ENCODE measurements at regions of chr14 and their contacts with region 1.

Region 1: DNA sequence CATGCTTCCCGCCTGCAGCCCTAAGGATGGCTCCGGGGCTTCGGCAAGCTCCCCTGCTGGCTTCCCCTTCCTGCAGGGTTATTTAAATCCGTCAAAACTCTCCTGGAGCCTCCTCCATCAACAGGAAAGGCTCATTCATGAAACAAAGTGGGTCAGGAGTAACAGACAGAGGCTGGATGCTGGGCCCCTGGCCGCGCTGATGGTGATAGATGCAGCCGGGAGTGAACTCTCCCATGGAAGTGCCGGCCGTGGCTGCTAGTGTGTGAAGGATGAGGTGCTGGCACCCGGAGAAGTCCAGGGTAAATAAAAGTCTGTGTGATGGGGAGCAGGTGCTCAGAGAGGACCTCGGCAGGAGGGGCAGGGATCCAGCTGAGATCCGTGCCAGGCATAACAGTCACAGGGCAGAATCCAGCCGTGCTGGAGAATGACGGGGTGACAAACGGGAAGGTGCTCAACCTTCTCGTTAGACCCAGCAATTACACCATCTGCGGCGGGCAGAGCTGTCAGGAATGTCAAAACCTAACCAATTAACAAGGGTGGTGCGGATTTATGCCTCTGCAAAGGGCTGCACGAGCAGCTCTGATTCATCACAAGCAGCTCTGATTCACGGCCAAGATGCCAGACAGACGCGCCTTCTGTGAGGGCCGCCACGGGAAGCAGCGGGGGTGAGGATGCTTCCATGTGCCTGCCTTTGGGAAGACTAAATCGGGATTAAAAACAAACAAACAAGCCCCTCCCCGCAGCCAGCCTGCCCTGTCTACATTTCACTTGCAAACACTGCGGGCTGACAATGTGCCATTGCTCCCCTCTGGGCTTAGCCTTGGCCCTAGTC is 55.6 kb downstream of the SYNE3 start:
- DNase-seq: peak; percentile 35
- H3K4me3 ChIP-seq: no peak overlapping the region
- CTCF ChIP-seq: no peak

Region 2: DNA sequence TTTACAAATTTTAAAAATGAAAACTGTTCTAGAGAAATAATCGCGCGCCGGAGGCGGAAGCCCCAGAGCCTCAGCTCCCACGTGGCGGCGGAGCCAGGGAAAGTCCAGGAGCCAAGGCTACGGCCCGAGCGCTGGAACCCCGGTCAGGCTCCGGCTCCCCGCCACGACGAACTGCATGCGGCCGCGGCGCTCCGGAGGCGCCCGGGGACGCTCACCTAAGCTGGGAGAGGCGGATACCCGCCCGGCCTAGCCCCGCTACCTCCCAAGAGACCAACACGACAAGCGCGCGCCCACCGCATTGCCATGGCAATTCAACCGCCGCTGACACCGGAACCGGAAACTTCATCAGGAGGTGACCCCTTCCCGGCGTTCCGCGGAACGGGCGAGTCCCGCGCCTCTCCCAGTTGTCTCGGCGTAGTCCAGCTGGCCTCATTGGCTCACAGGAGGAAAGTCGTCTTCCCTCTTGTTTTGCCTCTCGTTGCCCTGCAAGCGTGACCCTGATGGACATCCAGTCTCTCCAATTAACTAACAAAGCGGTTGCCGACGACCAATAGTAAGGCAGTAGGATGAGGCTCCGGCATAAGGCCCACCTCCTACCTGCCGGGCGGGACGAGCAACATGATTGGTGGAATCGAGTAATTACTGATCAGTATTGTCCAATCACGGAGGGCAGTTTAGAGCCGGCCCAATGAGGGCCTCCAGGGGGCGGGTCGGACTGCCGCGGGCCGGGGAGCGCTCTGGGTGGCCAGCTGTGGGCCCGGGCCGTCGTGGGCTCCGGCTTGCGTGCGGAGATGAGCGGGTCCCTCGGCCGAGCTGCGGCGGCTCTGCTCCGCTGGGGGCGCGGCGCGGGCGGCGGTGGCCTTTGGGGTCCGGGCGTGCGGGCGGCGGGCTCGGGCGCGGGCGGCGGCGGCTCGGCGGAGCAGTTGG is 73.7 kb after region 1 on chr14 and contains the start of gene GLRX5:
- in situ Hi-C with region 1: loop called (anchors 5 kb)
- DNase-seq: peak; percentile 100
- H3K4me3 ChIP-seq: peak within 1 kb of the TSS; percentile 87
- CTCF ChIP-seq: no peak

Region 3: GRCh38 chr14:95577067-95577800 is 116.4 kb after region 1 on chr14:
- in situ Hi-C with region 1: no loop called
- DNase-seq: no peak
- H3K4me3 ChIP-seq: no peak overlapping the region
- CTCF ChIP-seq: no peak